ENCODE measurements at regions of chr1 and their contacts with region 1.

Region 1: DNA sequence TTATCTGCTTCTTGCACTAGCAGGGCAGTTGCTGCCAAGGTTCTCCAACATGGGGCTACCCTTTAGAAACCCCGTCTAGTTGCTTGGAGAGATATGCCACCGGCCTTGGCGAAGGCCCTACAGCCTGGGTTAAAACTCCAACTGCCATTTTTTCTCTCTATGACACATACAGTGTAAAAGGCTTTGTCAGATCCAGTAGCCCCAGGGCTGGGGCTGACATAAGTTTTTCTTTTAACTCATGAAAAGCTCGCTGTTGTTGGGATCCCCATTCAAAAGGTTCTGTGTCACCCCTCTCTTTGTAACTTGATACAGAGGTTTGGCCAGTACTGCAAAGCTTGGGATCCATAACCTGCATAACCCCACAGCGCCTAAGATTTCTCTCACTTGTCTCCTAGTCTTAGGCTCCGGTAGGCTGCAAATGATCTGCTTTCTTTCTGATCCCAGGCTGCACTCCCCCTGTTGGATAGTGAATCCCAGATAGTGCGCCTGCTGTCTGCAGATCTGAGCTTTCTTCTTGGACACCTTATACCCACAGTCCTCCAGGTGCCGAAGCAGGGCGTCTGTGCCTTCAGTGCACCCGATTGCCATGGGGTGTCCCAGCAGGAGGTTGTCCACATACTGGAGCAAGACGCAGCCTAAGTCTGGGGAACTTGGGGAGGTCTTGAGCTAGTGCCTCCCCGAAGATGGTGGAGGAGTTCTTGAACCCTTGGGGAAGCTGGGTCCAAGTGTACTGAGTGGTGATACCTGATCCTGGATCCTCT is 406.2 kb downstream of the TGFB2 start:
- DNase-seq: no peak
- H3K4me3 ChIP-seq: no peak overlapping the region
- H3K27ac ChIP-seq: no peak overlapping the region
- H3K4me1 ChIP-seq: no peaks in the 10 kb centered on the region
- H3K27me3 ChIP-seq: no peaks in the 10 kb centered on the region
- CTCF ChIP-seq: no peak
- POLR2A ChIP-seq: no peak

Region 2: DNA sequence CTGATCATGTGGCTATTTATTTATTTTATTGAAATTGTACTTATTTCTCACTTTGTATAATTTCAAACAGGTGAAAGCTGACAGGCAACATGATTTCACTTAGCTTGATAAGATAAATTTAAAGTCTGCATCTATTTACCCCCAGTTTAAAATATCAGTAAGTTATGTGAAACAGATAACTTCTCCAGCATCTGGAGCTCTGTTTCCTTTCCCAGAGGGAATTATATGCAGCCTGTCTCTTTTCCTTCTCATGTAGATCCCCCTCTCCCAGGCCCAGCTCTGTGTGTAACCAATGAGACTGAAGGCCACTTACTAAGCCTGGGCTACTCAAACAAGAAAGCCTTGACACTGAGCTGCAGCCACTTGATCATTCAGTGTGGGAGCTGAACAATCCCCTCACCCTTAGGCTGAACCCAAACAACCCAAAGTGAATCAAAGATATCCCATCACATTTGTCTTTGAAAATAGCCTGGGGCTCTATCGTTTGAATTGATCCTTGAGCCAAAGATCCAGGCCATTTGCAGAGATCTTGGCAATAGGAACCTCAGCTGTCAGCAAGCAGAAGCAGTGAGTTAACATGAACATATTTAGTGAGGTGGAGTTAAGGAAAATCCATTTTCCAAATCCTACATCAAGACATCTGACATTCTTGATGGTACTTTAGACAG is 22.3 kb before region 1 on chr1:
- CTCF ChIA-PET with region 1: no interaction called
- POLR2A ChIA-PET with region 1: no interaction called
- dilution Hi-C with region 1: no loop called
- intact Hi-C with region 1: loop called (anchors 1 kb)
- DNase-seq: no peak
- H3K4me3 ChIP-seq: no peak overlapping the region
- H3K27ac ChIP-seq: no peak overlapping the region
- H3K4me1 ChIP-seq: no peaks in the 10 kb centered on the region
- H3K27me3 ChIP-seq: no peaks in the 10 kb centered on the region
- CTCF ChIP-seq: no peak
- POLR2A ChIP-seq: no peak

Measured in endothelial cell of umbilical vein (primary cell).